ENCODE measurements at regions of chr3 and their contacts with region 1.

Region 1: GRCh38 chr3:45516829-45517228 is 77.7 kb upstream of the LIMD1 start:
- DNase-seq: no peak
- H3K4me3 ChIP-seq: no peak overlapping the region
- H3K27ac ChIP-seq: no peak overlapping the region
- H3K27me3 ChIP-seq: no peaks in the 10 kb centered on the region
- CTCF ChIP-seq: no peak

Region 2: GRCh38 chr3:45929042-45929679 is 412.3 kb after region 1 on chr3:
- intact Hi-C with region 1: loop called (anchors 10 kb)
- DNase-seq: peak in 7 of 10 donors; percentile 37 to 66 (median 54)
- H3K4me3 ChIP-seq: no peak overlapping the region
- H3K27ac ChIP-seq: no peak overlapping the region
- H3K27me3 ChIP-seq: no peaks in the 10 kb centered on the region
- CTCF ChIP-seq: peak in 55 of 56 donors; percentile 30 to 78 (median 66)